ENCODE measurements at regions of chr3 and their contacts with region 1.

Region 1: DNA sequence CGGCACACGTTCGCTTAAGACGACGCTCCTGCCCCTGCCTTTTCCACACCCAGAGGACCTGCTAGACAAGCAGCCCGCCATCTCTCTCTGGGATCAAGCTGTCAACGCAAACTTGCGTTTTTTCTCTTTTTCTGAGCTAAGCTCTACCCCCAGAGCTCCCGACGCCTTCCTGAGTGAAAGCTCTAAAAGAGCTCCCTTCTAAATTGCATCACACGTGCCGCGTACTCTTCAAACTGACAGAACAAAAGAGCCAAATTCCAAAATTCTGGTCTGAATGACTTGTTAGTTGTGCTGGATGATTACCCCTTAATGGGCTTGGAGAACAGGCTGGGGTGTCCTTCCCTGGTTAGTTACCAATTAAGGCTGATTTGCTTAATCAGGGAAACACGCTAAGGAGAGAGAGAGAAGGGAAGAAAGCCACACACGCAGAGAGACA is 81.2 kb downstream of the MDFIC2 start:
- DNase-seq: no peak
- H3K4me3 ChIP-seq: no peak overlapping the region
- H3K27ac ChIP-seq: no peak overlapping the region
- H3K4me1 ChIP-seq: no peaks in the 10 kb centered on the region
- H3K27me3 ChIP-seq: no peaks in the 10 kb centered on the region
- CTCF ChIP-seq: no peak

Region 2: GRCh38 chr3:70212512-70212911 is 18.8 kb before region 1 on chr3:
- CTCF ChIA-PET with region 1: interaction called, 17 read pairs
- POLR2A ChIA-PET with region 1: no interaction called
- intact Hi-C with region 1: no loop called
- DNase-seq: no peak
- H3K4me3 ChIP-seq: no peak overlapping the region
- H3K27ac ChIP-seq: no peak overlapping the region
- H3K4me1 ChIP-seq: no peaks in the 10 kb centered on the region
- H3K27me3 ChIP-seq: no peaks in the 10 kb centered on the region
- CTCF ChIP-seq: no peak